Activated CD8-positive, alpha-beta T cell treated with anti-CD3 and anti-CD28 coated beads for 36 hours (primary cell): ENCODE measurements at regions of chr14 and their contacts with region 1.

Region 1: DNA sequence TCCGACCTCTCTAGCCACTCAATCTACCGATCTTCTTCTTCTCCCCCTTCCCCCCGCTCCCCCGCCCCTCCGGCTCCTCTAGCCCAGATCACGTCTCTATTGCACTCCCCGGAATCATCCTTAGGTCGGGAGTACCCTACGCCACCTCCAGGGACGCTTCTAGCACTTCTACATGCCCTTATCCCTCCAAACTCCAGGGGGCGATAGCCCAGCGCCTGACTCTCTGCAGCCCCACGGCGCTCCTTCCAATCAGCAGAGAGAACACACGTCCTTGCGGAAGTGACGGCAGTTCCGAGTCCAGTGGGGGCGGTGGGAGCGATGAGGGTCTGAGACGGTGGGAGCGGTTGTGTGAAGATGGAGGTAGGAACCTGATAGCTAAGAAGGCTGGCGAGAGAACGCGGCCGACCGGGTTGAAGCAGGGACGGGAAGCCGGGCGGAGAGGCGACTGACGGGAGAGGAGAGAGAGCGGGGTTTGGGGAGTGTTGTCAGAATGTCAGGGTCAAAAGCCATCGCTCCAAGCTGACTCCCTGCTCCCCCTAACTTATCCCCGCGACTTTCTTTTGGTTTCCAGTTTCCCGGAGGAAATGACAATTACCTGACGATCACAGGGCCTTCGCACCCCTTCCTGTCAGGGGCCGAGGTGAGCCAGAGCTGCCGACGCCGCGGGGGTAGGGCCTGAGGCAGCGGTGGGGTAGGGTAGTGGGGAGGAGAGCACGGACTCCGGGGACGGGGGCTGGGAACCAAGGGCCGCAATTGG is at the starts of genes RAB2B and TOX4:
- DNase-seq: peak; percentile 97
- ATAC-seq: peak; percentile 99
- H3K4me3 Mint-ChIP-seq: peak within 1 kb of the TSS; percentile 98
- H3K27ac Mint-ChIP-seq: peak within 1 kb of the TSS; percentile 99
- H3K4me1 Mint-ChIP-seq: peaks cover 21% of the 10 kb centered on the region
- H3K27me3 Mint-ChIP-seq: no peaks in the 10 kb centered on the region
- CTCF ChIP-seq: peak; percentile 96
- total RNA-seq, gene RAB2B: 18.2 to 19.8 TPM
- total RNA-seq, gene TOX4: 65.2 to 65.8 TPM

Region 2: GRCh38 chr14:21437063-21437901 is 39.8 kb before region 1 on chr14:
- CTCF ChIA-PET with region 1: interaction called, 13 read pairs
- POLR2A ChIA-PET with region 1: interaction called, 5 read pairs
- intact Hi-C with region 1: no loop called
- DNase-seq: peak; percentile 100
- ATAC-seq: peak; percentile 100
- H3K4me3 Mint-ChIP-seq: peak overlapping the region; percentile 81
- H3K27ac Mint-ChIP-seq: peak overlapping the region; percentile 86
- H3K4me1 Mint-ChIP-seq: peaks cover 46% of the 10 kb centered on the region
- H3K27me3 Mint-ChIP-seq: no peaks in the 10 kb centered on the region
- CTCF ChIP-seq: no peak

Region 3: DNA sequence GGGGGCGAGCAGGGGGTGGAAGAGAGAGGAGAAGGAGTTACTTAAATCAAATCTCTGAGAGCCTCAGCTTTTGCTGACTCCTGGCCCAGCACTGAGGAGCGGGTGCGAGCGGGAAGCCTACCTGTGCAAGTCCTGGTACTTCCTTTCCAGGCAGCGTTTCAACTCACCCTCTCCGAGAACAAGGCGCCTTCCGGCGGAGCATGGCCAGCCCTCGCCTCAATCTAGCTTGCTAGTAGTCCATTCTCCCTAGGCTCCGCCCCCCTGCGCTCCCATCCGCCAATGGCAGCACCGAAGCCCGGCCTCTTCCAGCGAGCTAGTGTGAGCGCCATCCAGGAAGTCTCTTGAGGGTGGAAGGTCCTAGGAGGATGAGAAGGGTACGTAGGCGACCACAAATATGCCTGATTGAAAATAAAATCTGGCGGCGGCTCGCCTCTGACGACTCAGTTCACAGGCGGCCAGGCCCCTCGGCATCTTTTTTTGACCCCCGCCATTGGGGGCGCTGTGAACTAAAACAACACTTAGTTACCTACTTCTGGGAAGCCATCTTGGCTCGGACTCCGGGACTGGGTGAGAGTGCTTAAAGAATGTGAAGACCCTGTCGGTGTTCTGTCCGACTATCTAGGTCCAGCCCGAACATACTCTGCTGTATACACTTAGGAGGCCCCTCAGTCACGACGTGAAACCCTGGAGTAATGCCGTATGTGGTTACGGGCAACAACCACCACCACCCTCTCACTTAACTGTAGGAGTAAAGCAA is 21.0 kb before region 1 on chr14 and contains the start of gene CHD8:
- CTCF ChIA-PET with region 1: interaction called, 9 read pairs
- POLR2A ChIA-PET with region 1: interaction called, 13 read pairs
- intact Hi-C with region 1: loop called (anchors 1 kb)
- DNase-seq: peak; percentile 100
- ATAC-seq: peak; percentile 99
- H3K4me3 Mint-ChIP-seq: peak within 1 kb of the TSS; percentile 85
- H3K27ac Mint-ChIP-seq: peak within 1 kb of the TSS; percentile 97
- H3K4me1 Mint-ChIP-seq: peaks cover 29% of the 10 kb centered on the region
- H3K27me3 Mint-ChIP-seq: no peaks in the 10 kb centered on the region
- CTCF ChIP-seq: peak; percentile 45
- total RNA-seq, gene CHD8: 82.3 to 85.3 TPM

Region 4: DNA sequence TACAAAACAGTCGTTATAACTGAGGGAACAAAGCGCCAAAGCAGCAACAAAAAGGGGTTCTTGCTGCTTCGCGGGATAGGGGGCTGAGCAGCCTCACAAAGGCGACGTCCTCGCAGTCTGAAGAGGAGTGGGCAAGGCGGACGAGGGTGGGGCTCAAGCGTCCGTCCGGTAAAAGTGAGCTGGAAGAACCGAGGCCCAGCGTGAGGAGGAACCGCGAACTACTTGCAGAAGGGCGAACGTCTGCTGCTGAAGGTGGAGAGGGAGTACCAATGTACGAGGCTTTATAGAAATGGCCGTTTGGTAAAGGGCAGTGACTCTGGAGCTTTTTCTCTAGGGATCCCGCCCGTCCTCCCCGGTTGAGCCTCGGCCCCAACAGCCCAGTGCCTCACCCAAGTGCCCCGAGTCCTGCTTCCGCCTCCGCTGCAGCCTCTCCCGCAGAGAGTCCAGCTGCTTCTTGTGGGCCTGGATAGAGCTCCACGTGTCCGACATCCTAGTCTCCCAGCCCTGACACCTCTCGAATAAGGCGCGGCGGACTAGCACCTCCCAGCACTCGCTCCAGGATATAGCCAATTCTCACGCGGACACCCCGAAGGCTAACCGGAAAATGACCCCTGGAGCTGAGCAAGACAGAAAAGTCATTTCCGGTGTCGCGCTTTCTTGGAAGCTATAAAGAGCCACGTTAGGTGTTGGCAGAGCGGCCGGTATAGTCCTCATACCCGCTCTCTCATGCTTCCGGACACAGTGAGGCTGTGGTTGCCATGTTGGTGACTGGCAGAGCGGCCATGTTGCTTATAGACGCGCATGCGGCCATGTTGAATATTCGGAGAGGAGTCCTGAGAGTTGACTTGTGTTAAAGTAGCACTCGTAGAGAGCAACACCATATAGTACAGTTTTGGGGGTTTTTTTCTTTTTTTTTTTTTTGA is 33.9 kb after region 1 on chr14 and contains the start of gene METTL3:
- CTCF ChIA-PET with region 1: interaction called, 19 read pairs
- POLR2A ChIA-PET with region 1: interaction called, 17 read pairs
- intact Hi-C with region 1: no loop called
- DNase-seq: peak; percentile 96
- ATAC-seq: peak; percentile 99
- H3K4me3 Mint-ChIP-seq: peak within 1 kb of the TSS; percentile 100
- H3K27ac Mint-ChIP-seq: peak within 1 kb of the TSS; percentile 99
- H3K4me1 Mint-ChIP-seq: peaks cover 32% of the 10 kb centered on the region
- H3K27me3 Mint-ChIP-seq: no peaks in the 10 kb centered on the region
- CTCF ChIP-seq: no peak
- total RNA-seq, gene METTL3: 66.7 to 70.8 TPM

Region 5: GRCh38 chr14:21525962-21526671 is 49.0 kb after region 1 on chr14 and contains the start of gene SALL2:
- CTCF ChIA-PET with region 1: interaction called, 16 read pairs
- POLR2A ChIA-PET with region 1: interaction called, 3 read pairs
- intact Hi-C with region 1: no loop called
- DNase-seq: peak; percentile 83
- ATAC-seq: peak; percentile 90
- H3K4me3 Mint-ChIP-seq: peak within 1 kb of the TSS; percentile 70
- H3K27ac Mint-ChIP-seq: peak within 1 kb of the TSS; percentile 75
- H3K4me1 Mint-ChIP-seq: peaks cover 16% of the 10 kb centered on the region
- H3K27me3 Mint-ChIP-seq: no peaks in the 10 kb centered on the region
- CTCF ChIP-seq: no peak
- total RNA-seq, gene SALL2: 2.9 to 3.5 TPM